Right cardiac atrium (tissue), 5 donors: ENCODE measurements at regions of chr1 and their contacts with region 1.

Region 1: DNA sequence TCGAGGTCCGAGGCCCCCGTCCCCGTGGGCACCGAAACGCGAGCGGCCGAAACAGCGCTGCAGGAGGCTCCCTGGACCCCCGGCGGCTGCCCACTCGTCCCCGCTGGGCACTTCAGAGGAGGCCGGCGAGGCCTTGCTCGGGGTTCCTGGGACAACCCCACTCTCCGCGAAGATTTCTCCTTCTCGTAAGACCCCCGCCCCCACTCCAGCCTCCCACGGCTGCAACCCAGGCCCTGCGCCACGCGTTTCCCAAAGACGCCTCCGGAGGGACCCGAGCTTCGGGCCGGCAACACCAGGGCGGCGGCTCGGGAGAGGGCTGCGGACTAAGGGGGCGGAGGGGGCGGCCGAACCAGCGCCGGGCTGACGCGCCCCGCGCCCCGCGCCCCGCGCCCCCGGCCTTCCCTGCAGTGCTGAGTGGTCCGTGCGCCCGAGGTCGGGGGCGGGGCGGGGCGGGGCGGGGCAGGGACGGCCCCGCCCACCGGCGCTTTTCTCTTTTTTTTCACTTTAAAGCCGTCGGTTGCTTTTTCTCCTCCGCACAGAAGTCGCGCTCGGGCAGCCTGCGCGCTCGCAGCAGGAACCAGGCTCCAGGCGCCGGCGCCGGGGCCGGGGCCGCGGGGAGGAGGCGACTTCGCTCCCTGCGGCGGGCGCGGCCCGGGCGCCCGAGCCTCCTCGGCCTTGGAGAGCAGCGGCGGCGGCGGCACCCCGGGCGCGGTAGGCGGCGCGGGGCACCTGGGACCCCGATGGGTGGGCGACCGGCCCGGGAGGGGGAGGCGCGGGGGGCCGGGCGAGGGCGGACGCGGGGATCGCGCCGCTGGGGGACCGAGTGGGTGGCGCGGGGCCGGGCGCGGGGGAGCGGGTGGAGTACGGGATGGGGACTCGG is at the start of gene SPSB1:
- DNase-seq: peak; percentile 76 to 91 (median 89)
- ATAC-seq: peak; percentile 76 to 78
- H3K4me3 ChIP-seq: peak within 1 kb of the TSS; percentile 99
- H3K27ac ChIP-seq: peak within 1 kb of the TSS; percentile 96
- H3K4me1 ChIP-seq: peaks cover 14% of the 10 kb centered on the region
- H3K27me3 ChIP-seq: no peaks in the 10 kb centered on the region
- total RNA-seq, gene SPSB1: 15.5 to 24.0 (median 18.0) TPM

Region 2: DNA sequence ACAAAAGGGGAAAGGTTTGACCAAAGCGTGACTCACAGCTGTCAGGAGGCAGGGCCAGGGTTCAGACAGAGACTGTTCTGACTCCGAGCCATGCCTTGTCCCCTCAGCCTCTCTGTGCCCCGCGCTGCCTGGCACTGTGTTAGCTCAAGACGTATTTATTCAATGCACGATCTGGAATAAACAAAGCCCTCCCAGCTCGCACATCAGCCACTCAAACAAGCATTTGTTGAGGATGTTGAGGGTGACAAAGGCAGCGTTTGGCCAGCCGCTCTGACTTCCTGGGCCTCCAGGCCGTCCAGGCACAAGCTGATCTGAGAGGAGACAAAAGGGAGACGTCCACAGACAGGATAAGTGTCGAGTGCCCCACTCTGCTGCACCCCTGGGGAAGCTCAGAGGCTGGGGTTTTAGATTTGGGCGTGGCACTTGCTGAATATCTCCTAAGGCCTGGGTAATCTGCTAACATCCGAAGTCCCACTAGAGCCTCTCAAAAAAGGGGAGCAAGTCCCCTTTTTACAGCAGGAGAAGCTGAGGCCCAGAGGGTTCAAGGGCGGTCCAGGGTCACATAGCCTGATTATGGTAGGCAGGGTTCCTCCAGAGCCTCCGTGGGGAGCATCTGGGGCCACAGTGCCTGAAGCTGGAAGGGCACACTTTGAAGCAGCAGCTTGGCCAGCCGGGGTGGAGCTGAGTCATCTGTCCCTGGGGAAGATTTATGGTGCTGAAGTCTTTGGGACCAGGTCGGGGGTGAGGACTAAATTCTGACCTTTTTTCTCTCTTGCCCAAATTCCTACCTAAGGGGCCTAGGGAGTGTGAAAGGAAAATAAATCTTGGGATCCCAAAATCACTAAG is 96.0 kb after region 1 on chr1:
- intact Hi-C with region 1: loop called in 1 of 4 experiments (anchors 10 kb)
- DNase-seq: peak in 1 of 3 donors; percentile 53
- ATAC-seq: peak in 1 of 2 donors; percentile 20
- H3K4me3 ChIP-seq: no peak overlapping the region
- H3K27ac ChIP-seq: peak overlapping the region; percentile 30
- H3K4me1 ChIP-seq: peaks cover 8% of the 10 kb centered on the region
- H3K27me3 ChIP-seq: no peaks in the 10 kb centered on the region

Region 3: GRCh38 chr1:9449106-9449627 is 156.6 kb after region 1 on chr1:
- intact Hi-C with region 1: loop called in 2 of 4 experiments (anchors 5 to 10 kb)
- DNase-seq: peak; percentile 47 to 70 (median 52)
- ATAC-seq: peak; percentile 77 to 78
- H3K4me3 ChIP-seq: no peak overlapping the region
- H3K27ac ChIP-seq: peak overlapping the region; percentile 57
- H3K4me1 ChIP-seq: peaks cover 8% of the 10 kb centered on the region
- H3K27me3 ChIP-seq: no peaks in the 10 kb centered on the region

Region 4: GRCh38 chr1:9455487-9456234 is 163.1 kb after region 1 on chr1:
- intact Hi-C with region 1: loop called in 2 of 4 experiments (anchors 5 to 10 kb)
- DNase-seq: peak; percentile 78 to 93 (median 89)
- ATAC-seq: peak; percentile 81 to 84
- H3K4me3 ChIP-seq: no peak overlapping the region
- H3K27ac ChIP-seq: no peak overlapping the region
- H3K4me1 ChIP-seq: no peaks in the 10 kb centered on the region
- H3K27me3 ChIP-seq: no peaks in the 10 kb centered on the region

Region 5: GRCh38 chr1:9486466-9487140 is 194.0 kb after region 1 on chr1:
- intact Hi-C with region 1: loop called (anchors 2 to 5 kb)
- DNase-seq: no peak
- ATAC-seq: no peak
- H3K4me3 ChIP-seq: no peak overlapping the region
- H3K27ac ChIP-seq: no peak overlapping the region
- H3K4me1 ChIP-seq: no peaks in the 10 kb centered on the region
- H3K27me3 ChIP-seq: no peaks in the 10 kb centered on the region

Region 6: DNA sequence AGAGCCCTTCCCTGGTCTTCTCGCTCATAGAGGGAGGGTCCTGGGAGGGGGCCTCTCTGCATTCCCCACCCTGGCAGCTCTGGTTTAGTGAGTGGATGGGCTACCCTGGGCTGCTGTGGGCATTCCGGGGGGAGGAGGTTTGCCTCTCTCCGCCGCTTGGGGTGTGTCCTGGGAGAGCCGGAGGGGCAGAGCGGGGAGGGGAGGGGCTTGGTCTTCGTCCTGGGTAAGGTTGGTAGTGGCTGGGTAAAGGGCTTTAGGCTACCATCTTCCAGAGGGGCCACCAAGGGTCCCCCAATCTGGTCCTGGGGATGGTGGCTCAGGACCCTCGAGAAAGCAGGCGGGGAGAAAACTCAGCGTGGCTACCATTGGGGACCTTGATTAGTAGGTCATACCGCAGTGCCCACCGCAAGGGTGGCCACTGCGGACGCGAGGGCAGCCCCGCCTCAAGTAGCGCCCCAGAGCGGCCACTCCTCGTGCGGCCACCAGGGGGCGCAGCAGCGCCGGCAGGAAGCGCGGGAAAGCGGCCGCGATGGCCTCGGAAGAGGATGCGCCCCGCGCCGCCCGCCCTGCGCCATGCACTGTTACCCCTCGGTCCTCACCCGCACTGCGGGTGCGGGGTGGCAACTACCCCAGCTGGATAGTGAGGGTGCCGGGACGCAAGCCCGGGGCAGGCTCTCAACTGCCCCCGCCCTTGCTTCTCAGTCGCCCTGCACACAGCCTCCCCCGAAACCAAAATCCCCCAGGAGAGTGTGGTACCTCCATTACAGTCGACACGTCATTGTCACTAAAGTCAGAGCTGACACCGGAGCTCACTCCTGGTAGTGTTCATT is 202.5 kb after region 1 on chr1:
- intact Hi-C with region 1: loop called in 2 of 4 experiments (anchors 2 to 5 kb)
- DNase-seq: peak; percentile 55 to 86 (median 83)
- ATAC-seq: peak; percentile 68 to 75
- H3K4me3 ChIP-seq: no peak overlapping the region
- H3K27ac ChIP-seq: no peak overlapping the region
- H3K4me1 ChIP-seq: no peaks in the 10 kb centered on the region
- H3K27me3 ChIP-seq: no peaks in the 10 kb centered on the region